ENCODE measurements at regions of chr20 and their contacts with region 1.

Region 1: DNA sequence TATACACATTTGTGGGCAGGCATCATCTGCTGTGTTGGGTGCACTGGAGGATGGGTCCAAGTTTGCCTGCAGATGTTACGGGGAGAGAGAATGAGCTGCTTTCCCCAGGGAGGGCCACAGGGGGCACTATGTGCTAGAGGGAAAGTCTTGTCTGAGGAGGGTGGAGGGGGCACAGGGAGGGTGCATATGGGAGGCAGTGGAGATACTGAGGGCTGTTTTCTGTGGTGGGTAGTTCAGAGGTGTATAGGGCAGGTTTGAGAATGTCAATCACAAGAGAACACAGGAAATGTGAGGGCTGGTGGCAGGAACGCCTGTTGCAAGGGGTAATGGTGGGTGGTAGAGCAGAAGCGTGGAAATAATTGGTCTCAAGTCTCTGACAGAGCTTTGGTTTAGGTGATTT is 7.7 kb upstream of the PTPRA start:
- DNase-seq: peak in 2 of 3 donors; percentile 28 to 50
- H3K4me3 ChIP-seq: no peak overlapping the region
- H3K27ac ChIP-seq: no peak overlapping the region
- H3K4me1 ChIP-seq: peaks cover 2 to 35% (median 30%) of the 10 kb centered on the region in 4 experiments
- H3K27me3 ChIP-seq: no peaks in the 10 kb centered on the region

Region 2: GRCh38 chr20:2946988-2947961 is 81.6 kb after region 1 on chr20:
- CTCF ChIA-PET with region 1: no interaction called
- POLR2A ChIA-PET with region 1: no interaction called
- DNase-seq: peak; percentile 11 to 64 (median 25)
- H3K4me3 ChIP-seq: no peak overlapping the region
- H3K27ac ChIP-seq: peak overlapping the region in 1 of 2 experiments; percentile 29
- H3K4me1 ChIP-seq: peaks cover 0 to 6% (median 0%) of the 10 kb centered on the region in 4 experiments
- H3K27me3 ChIP-seq: no peaks in the 10 kb centered on the region

Region 3: DNA sequence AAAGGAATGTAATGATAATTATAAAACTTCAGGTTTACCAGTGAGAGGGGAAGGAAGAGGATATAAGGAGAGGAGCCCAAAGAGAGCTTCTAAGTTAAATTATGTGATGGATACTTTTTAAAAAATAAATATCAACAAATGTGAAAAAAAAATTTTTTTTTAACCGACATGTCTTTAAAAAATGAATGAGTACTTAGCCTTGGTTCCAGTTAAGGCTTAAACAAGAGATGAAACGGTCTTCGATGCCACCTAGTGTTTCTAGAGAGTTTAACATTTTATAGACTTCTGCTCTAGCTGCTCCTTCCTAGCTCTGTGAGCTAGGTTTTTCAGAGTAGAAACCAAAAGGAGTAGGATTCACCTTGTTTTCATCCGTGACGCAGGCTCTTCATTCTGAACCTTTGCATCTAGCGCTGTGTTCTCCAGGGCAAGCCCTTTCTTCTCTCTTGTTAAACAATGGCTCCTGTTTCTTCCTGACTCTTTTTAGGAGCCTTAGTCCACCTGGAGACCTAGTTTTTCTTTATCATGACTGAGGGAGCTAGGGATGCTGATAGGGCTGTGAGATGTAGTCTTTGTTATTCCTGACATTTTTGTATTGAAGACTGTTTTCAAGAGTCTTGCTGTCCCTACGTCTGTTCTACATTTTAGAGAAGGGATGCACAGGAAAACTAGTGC is 135.4 kb after region 1 on chr20:
- CTCF ChIA-PET with region 1: interaction called, 18 read pairs
- POLR2A ChIA-PET with region 1: no interaction called
- DNase-seq: peak; percentile 73 to 90 (median 87)
- H3K4me3 ChIP-seq: no peak overlapping the region
- H3K27ac ChIP-seq: no peak overlapping the region
- H3K4me1 ChIP-seq: no peaks in the 10 kb centered on the region
- H3K27me3 ChIP-seq: no peaks in the 10 kb centered on the region

Region 4: DNA sequence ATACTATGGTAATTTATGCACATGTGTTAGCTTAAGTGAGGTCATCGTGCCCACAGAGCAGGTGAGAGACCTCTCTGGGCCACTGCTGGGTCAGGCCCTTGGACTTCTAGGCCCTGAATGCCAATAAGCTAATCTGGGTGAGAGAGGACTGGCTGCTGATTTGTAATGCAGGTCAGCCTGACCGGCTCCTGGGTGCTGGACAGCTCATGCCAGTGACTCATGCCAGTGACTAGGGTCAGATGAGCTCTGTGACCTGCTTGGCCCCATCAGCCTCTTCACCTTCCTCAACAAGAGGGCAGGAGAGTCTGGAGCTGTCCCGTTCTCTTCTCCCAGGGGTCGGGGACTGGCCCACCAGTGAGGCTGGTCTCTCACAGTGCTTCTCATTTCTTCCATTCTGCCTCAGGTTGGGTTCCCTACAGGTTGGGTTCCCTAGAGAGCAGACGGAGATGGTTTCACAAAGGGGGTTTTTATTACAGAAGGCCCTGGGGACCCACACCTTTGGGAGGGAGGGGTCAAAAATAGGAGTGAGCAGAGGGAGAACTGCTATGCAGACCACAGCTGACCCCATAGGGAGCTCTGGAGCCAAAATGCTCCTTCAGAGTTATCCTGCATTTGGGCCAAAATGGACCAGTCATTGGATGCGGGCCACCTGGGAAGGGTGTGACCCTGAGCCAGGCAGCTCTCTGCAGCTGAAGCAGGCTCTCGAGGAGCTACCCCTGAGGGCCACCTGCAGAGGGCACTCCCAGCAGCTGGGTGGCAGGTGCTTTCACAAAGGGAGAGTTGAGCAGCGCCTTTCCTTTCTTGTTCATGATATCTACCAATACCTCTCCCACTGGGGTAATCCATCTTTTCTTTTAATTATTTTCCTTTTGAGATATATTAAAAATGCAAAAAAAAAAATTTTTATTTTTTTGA is 203.6 kb after region 1 on chr20:
- CTCF ChIA-PET with region 1: no interaction called
- POLR2A ChIA-PET with region 1: no interaction called
- DNase-seq: peak in 2 of 3 donors; percentile 56 to 59
- H3K4me3 ChIP-seq: no peak overlapping the region
- H3K27ac ChIP-seq: no peak overlapping the region
- H3K4me1 ChIP-seq: peaks cover 0 to 36% (median 23%) of the 10 kb centered on the region in 4 experiments
- H3K27me3 ChIP-seq: no peaks in the 10 kb centered on the region

Measured in common myeloid progenitor, CD34-positive (primary cell).